Heart right ventricle (tissue), 16 donors: ENCODE measurements at regions of chr17 and their contacts with region 1.

Region 1: GRCh38 chr17:4366327-4367063 is at the start of gene UBE2G1:
- DNase-seq: peak; percentile 98 to 99
- ATAC-seq: peak; percentile 92 to 96 (median 94)
- H3K4me3 ChIP-seq: peak within 1 kb of the TSS; percentile 82 to 100 (median 98)
- H3K27ac ChIP-seq: peak within 1 kb of the TSS; percentile 91 to 100 (median 98)
- H3K4me1 ChIP-seq: peaks cover 2 to 39% (median 29%) of the 10 kb centered on the region in 9 donors
- H3K27me3 ChIP-seq: no peaks in the 10 kb centered on the region
- CTCF ChIP-seq: peak in 5 of 9 donors; percentile 21 to 45 (median 37)
- total RNA-seq, gene UBE2G1: 82.1 to 119 (median 104) TPM

Region 2: DNA sequence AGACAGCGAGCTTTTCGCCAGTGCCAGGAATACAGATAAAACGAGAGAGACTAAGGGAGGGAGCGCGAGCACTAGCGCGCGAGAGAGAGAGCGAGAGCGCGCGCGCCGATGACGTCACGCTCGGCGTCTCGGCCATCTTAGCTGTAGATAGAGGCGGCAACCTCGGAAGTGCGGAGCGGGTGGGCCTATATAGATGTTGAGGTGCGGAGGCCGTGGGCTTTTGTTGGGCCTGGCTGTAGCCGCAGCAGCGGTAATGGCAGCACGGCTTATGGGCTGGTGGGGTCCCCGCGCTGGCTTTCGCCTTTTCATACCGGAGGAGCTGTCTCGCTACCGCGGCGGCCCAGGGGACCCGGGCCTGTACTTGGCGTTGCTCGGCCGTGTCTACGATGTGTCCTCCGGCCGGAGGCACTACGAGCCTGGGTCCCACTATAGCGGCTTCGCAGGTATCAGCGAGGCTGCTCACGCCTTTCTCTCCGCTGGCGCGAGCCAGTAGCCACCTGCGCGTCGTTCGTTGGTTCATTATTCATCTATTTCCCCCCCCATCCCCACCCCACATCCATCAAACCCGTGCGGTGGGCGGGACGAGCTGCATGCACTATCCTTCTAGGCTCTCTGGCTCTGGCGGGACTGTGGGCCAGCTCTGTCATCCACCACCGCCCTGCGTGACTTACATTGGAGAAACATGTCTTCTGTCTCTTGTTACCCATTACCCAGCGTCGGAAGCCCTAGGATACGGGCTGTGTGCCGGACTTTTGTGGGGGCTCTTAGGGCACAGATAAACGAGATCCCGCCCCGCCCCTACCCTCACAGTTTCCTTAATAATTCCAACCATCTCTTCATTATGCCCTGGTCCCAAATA is 222.7 kb before region 1 on chr17:
- intact Hi-C with region 1: loop called in 1 of 10 experiments (anchors 2 kb)
- DNase-seq: peak; percentile 91 to 92
- ATAC-seq: peak; percentile 91 to 98 (median 95)
- H3K4me3 ChIP-seq: peak overlapping the region; percentile 65 to 98 (median 90)
- H3K27ac ChIP-seq: peak overlapping the region; percentile 93 to 99 (median 98)
- H3K4me1 ChIP-seq: peaks cover 15 to 46% (median 41%) of the 10 kb centered on the region in 9 donors
- H3K27me3 ChIP-seq: no peaks in the 10 kb centered on the region
- CTCF ChIP-seq: no peak

Region 3: GRCh38 chr17:4215882-4216570 is 150.5 kb before region 1 on chr17:
- intact Hi-C with region 1: loop called in 6 of 10 experiments (anchors 2 to 10 kb)
- DNase-seq: no peak
- ATAC-seq: peak in 2 of 8 donors; percentile 42 to 44
- H3K4me3 ChIP-seq: no peak overlapping the region
- H3K27ac ChIP-seq: peak overlapping the region in 7 of 10 donors; percentile 7 to 83 (median 60)
- H3K4me1 ChIP-seq: peaks cover 0 to 39% (median 26%) of the 10 kb centered on the region in 9 donors
- H3K27me3 ChIP-seq: no peaks in the 10 kb centered on the region
- CTCF ChIP-seq: no peak

Region 4: GRCh38 chr17:4304417-4305027 is 62.0 kb before region 1 on chr17:
- intact Hi-C with region 1: loop called in 2 of 10 experiments (anchors 10 kb)
- DNase-seq: peak in 1 of 2 donors; percentile 58
- ATAC-seq: peak in 6 of 8 donors; percentile 54 to 72 (median 65)
- H3K4me3 ChIP-seq: no peak overlapping the region
- H3K27ac ChIP-seq: no peak overlapping the region
- H3K4me1 ChIP-seq: peaks cover 0 to 52% (median 17%) of the 10 kb centered on the region in 9 donors
- H3K27me3 ChIP-seq: no peaks in the 10 kb centered on the region
- CTCF ChIP-seq: peak; percentile 37 to 85 (median 75)

Region 5: GRCh38 chr17:4318186-4318585 is 48.3 kb before region 1 on chr17:
- intact Hi-C with region 1: loop called in 4 of 10 experiments (anchors 5 to 10 kb)
- DNase-seq: no peak
- ATAC-seq: no peak
- H3K4me3 ChIP-seq: no peak overlapping the region
- H3K27ac ChIP-seq: peak overlapping the region in 5 of 10 donors; percentile 1 to 72 (median 45)
- H3K4me1 ChIP-seq: peaks cover 2 to 78% (median 54%) of the 10 kb centered on the region in 9 donors
- H3K27me3 ChIP-seq: no peaks in the 10 kb centered on the region
- CTCF ChIP-seq: peak in 1 of 9 donors; percentile 13